HEK293 (cell line): ENCODE measurements at regions of chr11 and their contacts with region 1.

Region 1: DNA sequence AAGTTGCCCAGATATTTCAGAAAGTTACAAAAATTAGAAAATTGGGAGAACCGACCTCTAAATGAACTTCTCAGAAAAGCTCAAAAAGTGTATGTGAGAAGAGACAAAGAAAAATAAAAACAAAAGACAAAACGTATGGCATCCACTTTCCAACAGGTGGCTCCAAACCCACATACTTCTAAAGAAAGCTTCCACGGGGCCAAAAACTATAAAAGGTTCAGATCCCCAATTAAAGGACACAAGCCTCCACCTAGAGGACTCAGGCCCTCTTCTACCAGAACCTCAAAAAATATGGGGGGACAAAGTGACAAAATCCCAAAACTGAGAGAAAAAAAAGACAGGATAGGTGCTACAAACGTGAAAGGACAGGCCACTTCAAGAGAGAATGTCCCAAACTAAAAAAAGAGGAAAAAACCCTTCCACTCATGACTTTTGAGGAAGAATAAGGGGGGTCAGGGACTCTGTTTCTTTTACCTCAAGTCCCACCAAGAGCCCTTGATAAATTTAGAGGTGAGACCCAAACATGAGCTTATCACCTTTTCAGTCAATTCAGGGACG is 8.8 kb downstream of the SCGB2A1 start:
- H3K4me3 ChIP-seq: no peak overlapping the region
- H3K27ac ChIP-seq: no peak overlapping the region
- H3K4me1 ChIP-seq: no peaks in the 10 kb centered on the region
- CTCF ChIP-seq: 0 out of 2 replicates have a peak, but pooled peaks have one; percentile 20

Region 2: DNA sequence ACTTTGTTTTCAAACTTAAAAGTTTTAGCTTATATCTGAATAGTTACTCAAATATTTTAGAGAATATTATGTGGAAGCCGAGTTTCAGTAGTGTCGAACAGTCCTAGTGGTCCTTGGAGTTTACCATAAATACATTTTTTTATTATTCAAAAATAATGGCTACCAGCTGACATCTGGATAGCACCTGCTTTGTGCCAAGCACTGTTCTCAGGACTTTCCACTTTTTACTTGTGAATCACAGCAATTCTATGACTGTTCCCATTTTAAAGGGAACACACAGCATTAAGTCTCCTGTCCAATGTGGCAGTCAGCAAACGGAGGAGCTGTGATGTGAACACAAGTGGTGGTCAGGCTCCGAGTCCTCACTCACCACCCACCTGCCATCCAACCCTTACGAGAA is 12.8 kb before region 1 on chr11:
- CTCF ChIA-PET with region 1: interaction called, 10 read pairs
- POLR2A ChIA-PET with region 1: no interaction called
- H3K4me3 ChIP-seq: no peak overlapping the region
- H3K27ac ChIP-seq: no peak overlapping the region
- H3K4me1 ChIP-seq: no peaks in the 10 kb centered on the region
- CTCF ChIP-seq: no peak

Region 3: GRCh38 chr11:62315431-62315830 is 98.2 kb after region 1 on chr11:
- CTCF ChIA-PET with region 1: interaction called, 10 read pairs
- POLR2A ChIA-PET with region 1: no interaction called
- H3K4me3 ChIP-seq: no peak overlapping the region
- H3K27ac ChIP-seq: no peak overlapping the region
- H3K4me1 ChIP-seq: no peaks in the 10 kb centered on the region
- CTCF ChIP-seq: no peak